PC-9 (cell line): ENCODE measurements at regions of chr3 and their contacts with region 1.

Region 1: GRCh38 chr3:192566706-192567290 is 160.5 kb downstream of the FGF12 start:
- DNase-seq: peak; percentile 73 to 79
- H3K4me3 ChIP-seq: no peak overlapping the region
- H3K27ac ChIP-seq: no peak overlapping the region
- H3K4me1 ChIP-seq: peaks cover 4% of the 10 kb centered on the region; the same call in 1 of the 2 replicates
- H3K27me3 ChIP-seq: no peaks in the 10 kb centered on the region
- CTCF ChIP-seq: peak; percentile 95

Region 2: DNA sequence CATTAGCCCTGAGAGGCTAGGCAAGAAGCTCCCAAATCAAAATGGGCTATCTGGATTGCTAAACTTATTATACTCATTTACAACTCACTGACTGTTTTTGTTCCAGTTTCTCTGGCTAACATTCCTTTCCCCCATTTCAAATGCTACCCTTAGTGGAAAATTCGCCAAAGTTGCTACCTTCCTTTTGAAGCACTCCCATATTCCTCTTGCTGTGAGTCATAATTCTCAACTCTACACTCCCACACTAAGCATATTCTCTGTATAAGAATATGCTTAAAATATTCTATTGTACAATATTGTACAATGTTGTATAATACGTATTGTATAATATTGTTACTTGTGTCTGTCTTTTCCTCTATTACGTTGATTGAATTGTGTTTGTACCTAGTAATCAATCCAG is 707.3 kb before region 1 on chr3:
- CTCF ChIA-PET with region 1: no interaction called
- POLR2A ChIA-PET with region 1: no interaction called
- intact Hi-C with region 1: no loop called
- DNase-seq: no peak
- H3K4me3 ChIP-seq: no peak overlapping the region
- H3K27ac ChIP-seq: no peak overlapping the region
- H3K4me1 ChIP-seq: no peaks in the 10 kb centered on the region
- H3K27me3 ChIP-seq: no peaks in the 10 kb centered on the region
- CTCF ChIP-seq: no peak

Region 3: DNA sequence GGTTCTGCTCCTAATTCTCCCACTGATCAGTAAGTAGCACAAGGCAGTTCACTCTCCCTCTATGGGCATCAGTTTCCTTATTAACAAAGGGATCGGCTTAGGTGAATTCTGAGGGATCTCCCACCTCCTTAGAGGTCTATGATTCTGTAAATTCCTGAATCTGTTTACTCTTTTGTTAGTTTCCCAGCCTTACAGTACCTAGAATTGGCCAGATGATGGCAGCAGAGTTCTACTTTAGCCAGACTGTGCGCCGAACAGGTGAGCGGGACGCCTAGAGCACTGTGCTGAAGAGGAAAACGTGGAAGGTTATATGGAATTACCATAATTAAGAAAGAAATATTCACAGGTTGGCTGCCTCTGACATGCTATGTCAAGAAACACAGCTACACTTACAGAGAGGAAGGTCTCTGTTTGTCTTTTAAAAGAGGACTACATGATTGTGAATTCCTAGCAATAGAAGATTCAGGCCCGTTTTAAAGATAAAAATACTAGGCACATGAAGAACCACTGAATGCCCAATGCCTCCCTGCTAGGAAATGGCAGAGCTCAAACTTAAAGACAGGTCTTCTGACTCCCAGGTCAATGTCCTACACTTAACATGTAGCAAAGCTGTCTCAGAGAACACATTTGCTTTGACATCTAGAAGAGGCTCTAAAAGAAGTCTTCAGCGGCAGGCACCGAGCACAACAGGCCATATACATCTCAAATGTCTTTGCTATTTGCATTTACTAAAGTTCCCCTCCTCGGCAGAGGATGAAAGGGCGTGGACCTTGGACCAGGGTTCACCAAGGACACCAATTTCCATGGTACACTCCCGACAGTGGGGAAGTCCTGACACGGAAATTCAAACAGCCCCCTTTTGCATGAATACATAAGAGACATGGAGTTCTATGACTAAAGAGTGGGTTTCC is 99.3 kb before region 1 on chr3:
- CTCF ChIA-PET with region 1: no interaction called
- POLR2A ChIA-PET with region 1: no interaction called
- intact Hi-C with region 1: loop called (anchors 1 kb)
- DNase-seq: peak; percentile 56 to 63
- H3K4me3 ChIP-seq: no peak overlapping the region
- H3K27ac ChIP-seq: no peak overlapping the region
- H3K4me1 ChIP-seq: no peaks in the 10 kb centered on the region
- H3K27me3 ChIP-seq: no peaks in the 10 kb centered on the region
- CTCF ChIP-seq: peak; percentile 100

Region 4: DNA sequence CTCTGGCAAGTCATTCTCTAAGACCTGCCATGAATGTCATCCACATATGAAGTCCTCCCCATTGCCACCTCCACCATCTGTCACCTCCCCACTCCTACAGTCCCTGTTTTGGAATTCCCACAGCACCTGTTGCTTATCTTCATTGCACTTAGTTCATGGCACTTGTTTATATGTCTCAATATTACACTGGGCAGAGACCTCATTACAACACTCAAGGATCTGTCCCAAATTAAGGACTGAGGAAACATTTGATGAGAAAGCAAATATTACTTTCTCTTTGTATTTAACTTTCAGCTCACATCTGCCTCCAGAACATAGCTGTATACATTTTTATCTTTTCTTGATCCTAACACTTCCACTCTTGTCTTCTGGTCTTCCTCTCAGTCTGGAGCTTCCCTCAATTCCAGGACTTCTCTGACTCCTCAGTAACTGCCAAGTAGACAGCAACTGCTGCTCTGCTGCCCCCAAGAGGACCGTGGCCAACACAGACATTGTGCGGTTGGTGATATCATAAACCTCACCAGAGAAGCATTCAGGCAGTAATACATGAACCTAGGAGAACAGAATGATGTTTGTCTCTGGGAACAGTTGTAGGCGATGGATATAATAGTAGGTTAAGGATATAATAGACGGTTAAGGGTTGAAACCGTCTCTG is 205.6 kb after region 1 on chr3:
- CTCF ChIA-PET with region 1: interaction called, 7 read pairs
- POLR2A ChIA-PET with region 1: interaction called, 5 read pairs
- intact Hi-C with region 1: loop called (anchors 1 kb)
- DNase-seq: peak; percentile 43 to 53
- H3K4me3 ChIP-seq: no peak overlapping the region
- H3K27ac ChIP-seq: no peak overlapping the region
- H3K4me1 ChIP-seq: no peaks in the 10 kb centered on the region
- H3K27me3 ChIP-seq: no peaks in the 10 kb centered on the region
- CTCF ChIP-seq: peak; percentile 80

Region 5: GRCh38 chr3:192929755-192930547 is 363.2 kb after region 1 on chr3:
- CTCF ChIA-PET with region 1: no interaction called
- POLR2A ChIA-PET with region 1: no interaction called
- intact Hi-C with region 1: loop called (anchors 10 kb)
- DNase-seq: no peak
- H3K4me3 ChIP-seq: no peak overlapping the region
- H3K27ac ChIP-seq: no peak overlapping the region
- H3K4me1 ChIP-seq: no peaks in the 10 kb centered on the region
- H3K27me3 ChIP-seq: no peaks in the 10 kb centered on the region
- CTCF ChIP-seq: no peak

Region 6: DNA sequence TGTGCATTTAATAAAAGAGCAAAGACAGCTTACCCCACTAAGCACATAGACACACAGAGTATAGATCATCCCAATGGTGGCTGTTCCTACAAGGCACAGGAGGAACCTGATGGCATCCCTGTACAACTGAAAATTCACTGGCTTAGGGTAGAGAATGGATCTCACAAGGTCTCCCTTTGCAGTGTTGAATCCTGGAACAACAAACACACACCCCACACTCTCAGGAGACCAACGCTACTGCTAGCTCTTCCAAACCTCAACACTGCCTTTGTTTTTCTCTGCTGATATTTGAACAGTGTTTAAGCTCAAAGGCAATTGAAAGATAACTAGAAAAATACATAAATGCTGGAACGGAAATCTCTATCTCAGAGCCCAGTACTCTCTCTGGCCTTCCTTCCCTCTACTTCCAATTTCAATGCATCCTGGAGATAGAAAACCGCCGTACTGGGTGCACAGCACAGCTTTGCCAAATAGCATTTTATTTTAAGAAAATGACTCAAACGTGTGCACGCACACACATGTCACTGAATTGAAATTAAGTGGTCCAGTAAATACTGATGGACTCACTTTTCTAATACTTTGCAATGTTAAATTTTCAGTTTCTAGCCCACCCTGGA is 899.3 kb after region 1 on chr3:
- CTCF ChIA-PET with region 1: no interaction called
- POLR2A ChIA-PET with region 1: no interaction called
- intact Hi-C with region 1: loop called (anchors 10 kb)
- DNase-seq: no peak
- H3K4me3 ChIP-seq: no peak overlapping the region
- H3K27ac ChIP-seq: no peak overlapping the region
- H3K4me1 ChIP-seq: no peaks in the 10 kb centered on the region
- H3K27me3 ChIP-seq: peaks cover 18% of the 10 kb centered on the region; the same call in 1 of the 2 replicates
- CTCF ChIP-seq: no peak